RWPE1 (cell line): ENCODE measurements at regions of chr1 and their contacts with region 1.

Region 1: DNA sequence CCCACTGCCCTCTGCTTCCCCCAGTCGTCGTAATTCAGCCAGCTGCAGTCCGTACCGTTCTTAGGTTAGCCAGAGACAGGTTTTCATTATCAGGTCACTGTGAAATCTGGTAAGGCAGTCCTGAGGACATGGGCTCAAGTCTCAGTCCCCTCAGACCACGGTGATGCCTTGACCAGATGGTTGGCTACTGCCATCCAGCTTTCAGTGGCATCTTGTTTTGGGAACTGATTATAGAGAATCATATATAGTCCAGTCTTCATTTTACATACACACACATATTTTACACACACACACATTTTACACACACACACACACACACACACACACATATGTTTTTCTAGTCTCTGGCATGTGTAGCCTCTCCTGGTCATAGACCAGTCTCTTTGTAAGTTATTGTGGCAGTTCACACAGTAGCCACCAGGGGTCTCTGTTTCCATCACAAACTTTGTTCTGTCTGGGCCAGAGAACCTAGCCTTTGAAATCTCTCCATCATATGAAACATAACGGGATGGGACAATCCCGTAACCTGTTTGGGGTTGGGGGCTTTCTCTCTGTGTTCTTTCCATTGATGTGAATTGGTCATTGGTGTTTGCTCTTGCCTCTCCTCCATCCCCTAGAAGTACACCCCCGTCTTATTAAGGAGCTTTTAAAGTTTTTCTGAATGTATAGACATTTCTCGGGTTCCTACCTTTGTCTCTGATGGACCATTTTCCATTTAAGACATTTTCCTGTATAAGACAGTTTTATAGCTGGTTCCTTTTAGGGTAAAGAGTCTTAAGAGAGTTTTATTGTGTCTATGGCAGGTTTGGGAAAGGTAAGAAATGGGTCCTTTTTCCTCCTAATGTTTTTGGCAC is 8.4 kb upstream of the IKBKE start:
- DNase-seq: peak; percentile 81
- H3K27ac ChIP-seq: no peak overlapping the region
- CTCF ChIP-seq: peak; percentile 88

Region 2: DNA sequence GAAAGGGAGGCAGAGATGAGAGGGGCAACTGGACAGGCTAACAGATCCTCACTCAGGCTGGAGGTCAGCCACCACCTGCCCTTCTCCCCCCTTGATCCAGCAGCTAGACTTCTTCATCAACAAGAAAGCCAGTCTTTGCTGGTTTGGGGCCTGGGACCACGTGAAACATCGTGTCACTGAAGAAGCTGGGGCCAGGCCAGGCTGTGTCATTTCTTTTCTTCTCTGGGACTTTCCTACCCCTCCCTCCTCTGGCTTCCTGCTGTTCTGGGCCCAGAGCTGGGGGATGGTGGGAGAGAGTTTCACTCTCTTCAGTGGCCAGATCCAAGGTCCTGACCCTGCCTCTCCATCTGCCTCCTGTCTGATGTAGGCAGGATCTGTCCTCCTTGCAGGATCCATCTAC is 500.4 kb before region 1 on chr1:
- CTCF ChIA-PET with region 1: no interaction called
- POLR2A ChIA-PET with region 1: no interaction called
- DNase-seq: no peak
- H3K27ac ChIP-seq: peak overlapping the region; percentile 87
- CTCF ChIP-seq: no peak

Region 3: DNA sequence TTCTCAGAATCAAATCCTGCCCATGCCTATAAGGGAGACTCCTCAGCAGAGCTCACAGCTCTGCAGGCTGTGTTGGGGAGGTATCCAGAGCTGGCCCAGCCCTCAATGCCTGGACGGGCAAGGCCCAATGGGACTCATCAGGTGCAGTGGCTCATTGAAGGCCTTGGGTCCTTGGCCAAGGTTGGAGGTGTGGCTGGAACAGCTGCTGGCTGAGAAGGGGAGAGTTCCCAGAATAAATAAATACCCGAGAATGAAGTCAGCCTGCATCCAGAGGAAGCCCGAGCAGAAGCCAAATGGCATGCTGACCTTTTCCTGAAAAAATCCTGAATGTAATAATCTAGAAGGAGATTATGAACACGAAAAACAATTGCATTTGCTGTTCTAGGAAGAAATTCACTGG is 16.7 kb before region 1 on chr1:
- CTCF ChIA-PET with region 1: interaction called, 11 read pairs
- POLR2A ChIA-PET with region 1: no interaction called
- DNase-seq: no peak
- H3K27ac ChIP-seq: no peak overlapping the region
- CTCF ChIP-seq: no peak

Region 4: GRCh38 chr1:206566999-206567398 is 105.2 kb after region 1 on chr1:
- CTCF ChIA-PET with region 1: no interaction called
- POLR2A ChIA-PET with region 1: no interaction called
- DNase-seq: no peak
- H3K27ac ChIP-seq: no peak overlapping the region
- CTCF ChIP-seq: no peak